ENCODE measurements at regions of chr10 and their contacts with region 1.

Region 1: GRCh38 chr10:93482145-93482834 is at the start of gene MYOF:
- DNase-seq: peak; percentile 73 to 84
- H3K4me3 ChIP-seq: peak within 1 kb of the TSS; percentile 59 to 64
- H3K27ac ChIP-seq: peak within 1 kb of the TSS; percentile 89 to 92
- H3K4me1 ChIP-seq: peaks cover 0 to 44% (median 17%) of the 10 kb centered on the region in 4 donors
- H3K27me3 ChIP-seq: no peaks in the 10 kb centered on the region
- CTCF ChIP-seq: peak; percentile 58 to 73

Region 2: GRCh38 chr10:93425861-93426260 is 56.4 kb before region 1 on chr10:
- intact Hi-C with region 1: loop called (anchors 5 kb)
- DNase-seq: no peak
- H3K4me3 ChIP-seq: no peak overlapping the region
- H3K27ac ChIP-seq: peak overlapping the region in 1 of 2 donors; percentile 7
- H3K4me1 ChIP-seq: peaks cover 0 to 44% (median 27%) of the 10 kb centered on the region in 4 donors
- H3K27me3 ChIP-seq: no peaks in the 10 kb centered on the region
- CTCF ChIP-seq: no peak

Region 3: DNA sequence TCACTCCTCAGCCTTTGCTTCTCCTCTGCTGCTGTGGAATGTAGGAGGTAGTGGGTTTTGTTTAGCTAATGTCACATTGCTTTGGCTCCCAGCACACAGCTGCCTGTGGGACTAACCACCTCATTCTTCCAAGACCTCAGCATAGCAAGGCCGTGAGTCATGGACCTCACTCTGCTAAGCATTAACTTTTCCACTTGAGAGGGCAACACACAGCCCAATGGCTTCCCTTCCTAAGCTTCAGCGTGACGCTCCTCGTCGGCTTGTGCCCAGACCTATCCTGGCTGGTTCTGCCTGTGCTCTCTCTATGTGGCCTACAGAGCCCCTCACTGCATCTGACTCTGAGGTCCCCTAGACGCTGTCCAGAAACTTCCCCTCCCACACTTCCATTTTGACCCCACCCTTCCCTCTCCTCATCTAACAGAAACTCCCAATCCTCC is 23.5 kb before region 1 on chr10:
- intact Hi-C with region 1: no loop called
- DNase-seq: peak; percentile 92 to 93
- H3K4me3 ChIP-seq: peak overlapping the region; percentile 9 to 25
- H3K27ac ChIP-seq: peak overlapping the region; percentile 91 to 92
- H3K4me1 ChIP-seq: peaks cover 0 to 64% (median 53%) of the 10 kb centered on the region in 4 donors
- H3K27me3 ChIP-seq: no peaks in the 10 kb centered on the region
- CTCF ChIP-seq: no peak